ENCODE measurements at regions of chr10 and their contacts with region 1.

Region 1: DNA sequence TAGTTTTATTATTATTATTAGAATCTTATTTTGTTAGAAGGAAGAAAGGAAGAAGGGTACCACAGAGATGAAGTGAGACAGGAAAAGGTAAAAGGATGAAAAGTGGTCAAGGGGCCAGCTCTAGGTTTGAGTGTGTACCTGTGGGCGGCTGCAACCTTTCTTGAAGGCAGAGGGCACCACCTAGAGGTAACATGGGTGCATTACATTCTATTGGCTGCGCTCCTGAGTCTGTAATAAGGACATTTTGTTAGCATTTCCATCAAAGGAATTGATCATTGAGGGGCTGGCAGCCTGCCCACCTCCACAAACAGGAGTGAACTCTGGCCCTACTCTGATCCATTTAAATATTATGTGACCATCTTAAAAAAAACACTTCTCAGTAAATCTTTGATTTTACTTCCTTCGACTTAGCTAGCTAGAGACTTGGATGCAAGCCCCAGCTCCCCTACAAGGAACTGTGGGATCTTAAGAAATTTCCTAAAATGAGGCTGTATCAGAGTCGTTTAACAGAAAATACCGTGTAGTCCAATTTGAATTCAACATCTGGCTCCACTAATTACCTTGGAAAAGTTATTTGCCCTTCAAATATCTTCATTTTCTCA is 610.4 kb downstream of the IPMK start:
- DNase-seq: peak; percentile 40
- CTCF ChIP-seq: peak; percentile 80

Region 2: DNA sequence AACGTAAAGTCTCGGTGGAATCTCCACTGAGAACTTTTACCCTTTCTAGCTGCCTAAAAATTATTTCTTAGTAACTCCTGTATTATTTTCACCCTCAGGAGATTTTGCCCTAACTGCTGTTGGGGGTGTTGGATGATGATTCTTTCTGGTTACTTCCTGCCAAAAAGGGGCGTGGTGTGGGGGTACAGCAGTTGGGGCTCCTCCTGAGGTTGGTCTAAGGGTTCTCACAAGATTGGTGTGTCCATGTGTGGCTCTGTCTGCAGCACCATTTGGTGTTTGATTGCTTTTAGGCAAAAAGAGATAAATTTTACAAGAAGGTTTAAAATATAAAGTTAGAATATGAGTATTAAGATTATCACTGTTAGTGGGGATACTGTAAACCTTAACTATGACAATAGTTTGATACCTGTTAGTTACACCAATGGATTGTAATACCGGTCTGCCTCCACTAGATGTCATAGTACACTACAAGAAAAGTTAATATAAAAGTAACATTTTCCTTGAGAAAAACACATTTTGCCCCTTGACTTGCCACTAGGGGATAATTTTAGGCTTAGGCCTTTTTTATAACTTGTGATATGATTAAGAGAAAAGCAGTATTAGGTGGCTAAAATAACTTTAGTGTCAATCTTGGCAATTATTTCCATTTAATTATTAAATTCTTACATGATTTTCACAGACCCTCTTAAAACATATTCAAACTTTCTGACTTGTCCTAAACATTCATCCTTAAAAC is 318.3 kb before region 1 on chr10:
- CTCF ChIA-PET with region 1: interaction called, 49 read pairs
- POLR2A ChIA-PET with region 1: no interaction called
- DNase-seq: peak; percentile 34
- CTCF ChIP-seq: peak; percentile 62

Region 3: GRCh38 chr10:57579926-57580325 is 77.3 kb before region 1 on chr10:
- CTCF ChIA-PET with region 1: interaction called, 14 read pairs
- POLR2A ChIA-PET with region 1: no interaction called
- DNase-seq: no peak
- CTCF ChIP-seq: peak; percentile 40

Region 4: DNA sequence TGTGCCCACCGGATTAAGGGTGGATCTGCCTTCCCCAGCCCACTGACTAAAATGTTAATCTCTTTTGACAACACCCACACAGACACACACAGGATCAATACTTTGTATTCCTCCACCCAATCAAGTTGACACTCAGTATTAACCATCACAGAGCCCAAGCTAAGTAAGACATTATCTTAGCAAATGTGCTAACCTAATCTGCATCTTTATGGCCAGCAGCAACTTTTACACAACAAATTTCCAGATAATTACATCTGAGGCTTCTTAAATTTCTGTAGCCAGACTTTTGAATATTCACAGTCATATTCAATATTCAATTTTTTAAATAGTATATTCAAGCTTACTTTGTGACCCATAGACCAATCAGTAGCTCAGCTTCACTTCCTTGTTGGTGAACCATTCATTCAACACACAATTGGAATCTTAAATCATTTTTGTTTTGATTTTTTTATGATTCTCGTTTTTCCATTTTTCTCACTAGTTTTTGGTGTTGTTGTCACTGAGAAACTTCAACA is 16.2 kb after region 1 on chr10:
- CTCF ChIA-PET with region 1: interaction called, 45 read pairs
- POLR2A ChIA-PET with region 1: no interaction called
- DNase-seq: no peak
- CTCF ChIP-seq: no peak

Measured in GM10248 (cell line).